Heart right ventricle (tissue), 16 donors: ENCODE measurements at regions of chr14 and their contacts with region 1.

Region 1: DNA sequence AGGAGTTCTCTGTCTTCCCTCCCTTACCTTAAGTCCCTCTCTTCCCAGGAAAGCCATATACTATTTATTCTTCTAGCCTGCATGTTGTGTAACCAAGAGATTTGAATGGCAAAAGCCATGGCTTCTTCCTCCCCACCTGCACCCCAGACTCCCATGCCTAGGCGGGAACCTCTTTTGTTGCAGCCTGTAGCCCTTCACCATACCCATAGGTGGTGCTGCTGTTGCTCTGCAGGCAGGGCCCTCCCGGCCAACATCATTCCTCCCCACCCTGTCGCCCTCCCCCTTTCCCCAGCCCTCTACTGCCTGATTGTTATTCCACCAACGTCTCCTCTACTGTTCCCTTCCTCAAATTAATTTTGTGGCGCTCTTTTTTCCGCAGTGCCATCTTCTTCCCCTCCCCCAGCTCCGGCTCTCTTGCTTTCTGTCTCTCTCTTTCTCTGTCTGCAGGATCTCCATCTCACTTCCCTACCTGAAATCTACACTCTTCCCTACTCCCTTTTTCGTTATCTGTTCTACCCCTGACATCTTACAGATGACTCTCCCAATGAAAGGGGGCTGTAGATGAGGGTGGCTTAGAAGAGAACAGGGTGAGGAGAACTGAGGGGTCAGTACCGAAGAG is 13.8 kb downstream of the NGDN start:
- DNase-seq: no peak
- ATAC-seq: peak in 2 of 8 donors; percentile 42 to 44
- H3K4me3 ChIP-seq: no peak overlapping the region
- H3K27ac ChIP-seq: no peak overlapping the region
- H3K4me1 ChIP-seq: peaks cover 0 to 2% (median 0%) of the 10 kb centered on the region in 9 donors
- H3K27me3 ChIP-seq: no peaks in the 10 kb centered on the region
- CTCF ChIP-seq: peak in 5 of 9 donors; percentile 16 to 31 (median 20)

Region 2: DNA sequence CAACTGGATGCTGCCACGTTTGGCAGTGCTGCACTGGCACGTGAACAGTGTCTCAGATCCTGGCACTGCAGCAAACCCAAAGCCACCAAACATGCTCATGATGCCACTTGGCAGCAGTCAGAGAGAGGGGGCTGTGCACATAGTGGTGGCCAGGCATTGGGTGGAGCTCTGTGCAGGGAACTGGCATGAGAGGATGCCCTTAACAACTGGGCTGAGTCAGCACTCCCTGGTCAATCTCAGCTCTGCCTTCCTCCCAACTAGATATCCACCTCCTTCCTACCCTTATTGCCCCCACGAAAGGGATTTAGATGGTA is 31.3 kb after region 1 on chr14:
- intact Hi-C with region 1: no loop called
- DNase-seq: peak in 1 of 2 donors; percentile 14
- ATAC-seq: peak in 7 of 8 donors; percentile 53 to 70 (median 65)
- H3K4me3 ChIP-seq: no peak overlapping the region
- H3K27ac ChIP-seq: no peak overlapping the region
- H3K4me1 ChIP-seq: peaks cover 0 to 5% (median 0%) of the 10 kb centered on the region in 9 donors
- H3K27me3 ChIP-seq: no peaks in the 10 kb centered on the region
- CTCF ChIP-seq: no peak

Region 3: DNA sequence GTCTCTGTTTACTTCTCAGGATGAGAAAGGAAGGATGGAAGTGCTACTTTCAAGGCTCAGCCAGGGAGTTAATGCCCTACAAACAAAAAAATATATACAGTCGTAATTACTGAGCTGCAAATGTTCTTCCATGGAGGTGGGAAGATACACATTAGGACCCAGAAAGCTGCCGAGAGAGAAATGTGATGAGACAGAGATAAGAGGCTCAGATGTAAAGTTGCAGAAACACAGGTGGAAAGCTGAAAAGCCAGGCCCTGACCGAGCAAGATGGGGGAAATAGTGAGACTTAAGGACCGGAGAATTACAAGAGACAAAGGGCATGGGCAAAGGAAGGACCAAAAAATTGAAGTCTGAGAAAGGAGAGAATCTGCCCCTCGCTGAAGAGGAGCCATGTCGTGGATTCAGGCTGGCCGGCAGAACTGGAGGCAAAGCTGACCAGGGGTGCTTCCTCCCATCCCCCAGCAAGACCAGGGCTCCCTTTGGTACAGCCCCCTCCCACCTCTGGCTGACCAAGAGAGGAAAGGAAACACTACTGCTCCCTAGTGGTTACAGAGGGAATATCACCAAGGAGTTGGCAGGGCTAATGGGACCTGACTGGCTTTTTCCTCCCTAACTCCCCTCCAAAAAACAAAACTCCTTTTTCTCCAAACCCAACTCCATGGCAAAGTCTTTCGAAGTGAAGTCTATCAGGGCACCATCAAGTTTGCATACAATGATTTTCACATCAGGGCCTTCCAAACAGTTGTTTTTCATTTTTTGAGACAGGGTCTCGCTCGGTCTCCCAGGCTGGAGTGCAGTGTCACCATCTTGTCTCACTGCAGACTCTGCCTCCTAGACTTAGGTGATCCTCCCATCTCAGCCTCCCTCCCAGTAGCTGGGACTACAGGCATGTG is 56.1 kb after region 1 on chr14:
- intact Hi-C with region 1: loop called in 3 of 10 experiments (anchors 5 to 10 kb)
- DNase-seq: no peak
- ATAC-seq: peak in 7 of 8 donors; percentile 31 to 75 (median 57)
- H3K4me3 ChIP-seq: no peak overlapping the region
- H3K27ac ChIP-seq: no peak overlapping the region
- H3K4me1 ChIP-seq: peaks cover 0 to 11% (median under 1%) of the 10 kb centered on the region in 9 donors
- H3K27me3 ChIP-seq: no peaks in the 10 kb centered on the region
- CTCF ChIP-seq: peak; percentile 43 to 80 (median 71)

Region 4: GRCh38 chr14:23567192-23568020 is 84.1 kb after region 1 on chr14 and contains the start of gene AP1G2:
- intact Hi-C with region 1: loop called in 7 of 10 experiments (anchors 1 to 5 kb)
- DNase-seq: peak; percentile 84 to 85
- ATAC-seq: peak; percentile 59 to 89 (median 82)
- H3K4me3 ChIP-seq: peak within 1 kb of the TSS; percentile 59 to 78 (median 64)
- H3K27ac ChIP-seq: peak within 1 kb of the TSS in 8 of 10 donors; percentile 61 to 90 (median 71)
- H3K4me1 ChIP-seq: peaks cover 2 to 34% (median 16%) of the 10 kb centered on the region in 9 donors
- H3K27me3 ChIP-seq: peaks cover 0 to 12% (median 0%) of the 10 kb centered on the region in 7 donors
- CTCF ChIP-seq: no peak
- total RNA-seq, gene AP1G2: 6.6 to 19.9 (median 9.9) TPM